H1 (cell line): ENCODE measurements at regions of chr7 and their contacts with region 1.

Region 1: DNA sequence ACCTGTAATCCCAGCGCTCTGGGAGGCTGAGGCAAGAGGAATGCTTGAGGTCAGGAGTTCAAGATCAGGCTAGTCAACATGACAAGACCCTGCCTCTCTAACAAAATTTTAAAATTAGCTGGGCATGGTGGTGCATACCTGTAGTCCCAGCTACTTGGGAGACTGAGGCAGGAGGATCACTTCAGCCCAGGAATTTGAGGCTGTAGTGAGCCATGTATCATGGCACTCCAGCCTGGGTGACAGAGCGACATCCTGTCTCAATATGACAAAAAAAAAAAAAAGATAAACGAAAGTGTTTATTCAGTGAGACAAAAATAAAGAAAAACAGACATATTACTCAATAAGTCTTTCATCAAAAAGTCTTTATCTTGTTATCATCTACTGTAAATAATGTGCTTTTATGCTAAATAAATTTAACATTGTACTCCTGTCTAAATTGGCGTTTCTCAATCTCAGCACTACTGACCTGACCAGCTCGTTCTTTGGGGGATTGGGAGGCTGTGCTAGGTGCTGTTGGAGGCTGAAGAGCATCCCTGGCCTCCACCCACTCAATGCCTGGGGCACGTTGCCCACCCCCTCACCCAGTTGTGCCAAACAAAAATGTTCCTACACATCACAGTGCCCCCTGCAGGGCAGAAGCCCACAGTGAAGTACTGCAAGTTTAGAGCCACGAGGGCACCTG is 57.7 kb downstream of the NCAPG2 start:
- DNase-seq: peak in 1 of 2 experiments; percentile 77
- H3K4me3 ChIP-seq: no peak overlapping the region
- H3K27ac ChIP-seq: no peak overlapping the region
- H3K4me1 ChIP-seq: no peaks in the 10 kb centered on the region
- H3K27me3 ChIP-seq: no peaks in the 10 kb centered on the region
- CTCF ChIP-seq: peak; percentile 50 to 74 (median 67)
- EP300 ChIP-seq: no peak
- POLR2A ChIP-seq: no peak
- RAD21 ChIP-seq: peak; percentile 34 to 58; a peak in 3 of 4 replicates

Region 2: DNA sequence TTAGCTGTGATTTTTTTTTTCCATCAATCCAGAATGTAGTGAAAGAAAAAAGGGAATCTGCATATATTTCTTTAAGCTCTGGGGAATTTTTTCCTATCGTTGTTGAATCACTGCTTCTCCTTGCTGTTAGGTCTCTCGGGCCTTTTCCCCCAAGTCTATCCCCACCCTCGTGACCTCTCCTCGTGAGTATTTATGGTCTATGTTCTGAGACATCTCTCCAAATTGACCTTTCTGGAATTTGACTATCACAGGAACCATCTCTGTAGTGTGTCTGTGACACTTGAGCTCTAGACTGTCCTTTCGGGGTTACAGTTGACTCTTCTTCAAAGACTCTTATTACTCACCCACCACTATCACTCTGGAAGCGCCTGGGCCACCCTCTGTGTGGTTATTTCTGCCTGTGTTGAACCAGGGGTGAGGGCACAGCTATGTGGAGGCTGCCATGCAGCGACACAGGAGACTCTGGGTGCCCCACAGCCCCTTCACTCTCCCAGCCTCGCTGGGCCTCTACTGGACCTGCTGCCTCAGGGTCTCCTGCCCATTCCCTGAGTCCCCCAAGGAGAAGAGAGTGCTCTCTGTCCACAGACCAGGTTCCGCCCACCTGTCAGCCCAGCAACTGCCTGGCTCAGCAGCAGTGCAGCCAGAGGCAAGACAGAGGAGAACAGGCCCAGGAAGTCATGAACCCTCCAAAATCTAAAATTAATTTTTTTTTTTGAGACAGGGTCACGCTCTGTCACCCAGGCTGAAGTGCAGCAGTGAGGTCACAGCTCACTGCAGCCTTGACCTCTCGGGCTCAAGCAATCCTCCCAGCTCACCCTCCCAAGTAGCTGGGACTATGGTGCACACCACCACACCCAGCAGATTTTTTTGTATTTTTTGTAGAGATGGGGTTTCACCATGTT is 13.6 kb before region 1 on chr7:
- CTCF ChIA-PET with region 1: interaction called, 19 read pairs
- POLR2A ChIA-PET with region 1: interaction called, 3 read pairs
- DNase-seq: peak in 1 of 2 experiments; percentile 28
- H3K4me3 ChIP-seq: no peak overlapping the region
- H3K27ac ChIP-seq: no peak overlapping the region
- H3K4me1 ChIP-seq: no peaks in the 10 kb centered on the region
- H3K27me3 ChIP-seq: no peaks in the 10 kb centered on the region
- CTCF ChIP-seq: no peak
- EP300 ChIP-seq: no peak
- POLR2A ChIP-seq: no peak
- RAD21 ChIP-seq: no peak

Region 3: GRCh38 chr7:158740013-158740656 is 93.2 kb after region 1 on chr7:
- CTCF ChIA-PET with region 1: no interaction called
- POLR2A ChIA-PET with region 1: no interaction called
- DNase-seq: peak in 1 of 2 experiments; percentile 40
- H3K4me3 ChIP-seq: no peak overlapping the region
- H3K27ac ChIP-seq: no peak overlapping the region
- H3K4me1 ChIP-seq: no peaks in the 10 kb centered on the region
- H3K27me3 ChIP-seq: no peaks in the 10 kb centered on the region
- CTCF ChIP-seq: no peak
- EP300 ChIP-seq: no peak
- POLR2A ChIP-seq: no peak
- RAD21 ChIP-seq: no peak